WTC11 (cell line): ENCODE measurements at regions of chr11 and their contacts with region 1.

Region 1: GRCh38 chr11:64358907-64359711 is at the start of gene RPS6KA4:
- DNase-seq: peak; percentile 49
- ATAC-seq: peak; percentile 49
- H3K4me3 Mint-ChIP-seq: peak within 1 kb of the TSS; percentile 80
- H3K27ac Mint-ChIP-seq: peak within 1 kb of the TSS; percentile 50
- H3K4me1 Mint-ChIP-seq: peaks cover 26% of the 10 kb centered on the region
- H3K27me3 Mint-ChIP-seq: no peaks in the 10 kb centered on the region
- CTCF ChIP-seq: no peak
- total RNA-seq, gene RPS6KA4: 16.8 to 18.3 TPM (median 18.3 TPM) in 3 replicates

Region 2: GRCh38 chr11:64269380-64270234 is 89.5 kb before region 1 on chr11:
- CTCF ChIA-PET with region 1: interaction called, 25 read pairs
- POLR2A ChIA-PET with region 1: interaction called, 5 read pairs
- DNase-seq: peak; percentile 98
- ATAC-seq: peak; percentile 83
- H3K4me3 Mint-ChIP-seq: peak overlapping the region; percentile 99
- H3K27ac Mint-ChIP-seq: peak overlapping the region; percentile 100
- H3K4me1 Mint-ChIP-seq: peaks cover 21% of the 10 kb centered on the region
- H3K27me3 Mint-ChIP-seq: no peaks in the 10 kb centered on the region
- CTCF ChIP-seq: no peak

Region 3: DNA sequence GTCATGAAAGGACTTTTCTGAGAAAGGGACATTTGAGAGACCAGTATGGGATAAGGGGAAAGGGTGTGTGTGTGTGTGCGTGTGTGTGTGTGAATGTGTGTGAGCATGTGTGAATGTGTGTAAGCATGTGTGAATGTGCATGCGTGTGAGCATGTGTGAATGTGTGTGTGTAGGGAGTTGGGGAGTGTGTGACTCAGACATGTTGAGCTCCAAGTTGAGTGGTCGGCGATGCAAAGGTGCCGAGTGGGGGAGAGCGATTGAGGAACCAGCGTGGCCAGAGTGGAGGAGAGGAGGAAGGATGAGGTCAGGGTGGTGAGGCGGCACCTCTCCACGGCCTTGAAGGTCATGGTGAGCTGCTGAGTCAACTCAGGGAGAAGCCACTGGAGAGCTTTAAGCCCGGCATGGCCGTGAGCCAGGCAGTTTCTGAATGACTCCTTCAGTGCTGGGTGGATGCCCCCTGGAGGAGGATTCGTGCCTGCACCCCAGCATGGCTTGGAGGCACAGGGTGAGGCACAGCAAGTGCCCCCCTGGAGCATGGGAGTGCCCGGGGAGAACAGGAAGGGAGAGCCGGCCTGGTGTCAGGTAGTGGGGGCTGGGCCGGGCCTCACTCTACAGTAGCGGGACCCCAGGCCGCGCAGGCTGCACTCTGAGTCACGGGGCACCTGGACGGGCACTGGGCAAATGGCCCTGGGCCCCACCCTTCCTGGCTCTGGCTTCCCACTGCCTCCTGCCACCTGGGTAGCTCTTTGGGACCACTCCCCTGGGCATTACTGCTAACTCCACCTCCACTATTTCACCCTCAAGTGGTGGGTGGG is 27.3 kb before region 1 on chr11:
- CTCF ChIA-PET with region 1: interaction called, 437 read pairs
- POLR2A ChIA-PET with region 1: no interaction called
- DNase-seq: peak; percentile 65
- ATAC-seq: peak; percentile 79
- H3K4me3 Mint-ChIP-seq: no peak overlapping the region
- H3K27ac Mint-ChIP-seq: peak overlapping the region; percentile 11
- H3K4me1 Mint-ChIP-seq: peaks cover 10% of the 10 kb centered on the region
- H3K27me3 Mint-ChIP-seq: peaks cover 12% of the 10 kb centered on the region; the same call in 1 of the 2 replicates
- CTCF ChIP-seq: no peak

Region 4: DNA sequence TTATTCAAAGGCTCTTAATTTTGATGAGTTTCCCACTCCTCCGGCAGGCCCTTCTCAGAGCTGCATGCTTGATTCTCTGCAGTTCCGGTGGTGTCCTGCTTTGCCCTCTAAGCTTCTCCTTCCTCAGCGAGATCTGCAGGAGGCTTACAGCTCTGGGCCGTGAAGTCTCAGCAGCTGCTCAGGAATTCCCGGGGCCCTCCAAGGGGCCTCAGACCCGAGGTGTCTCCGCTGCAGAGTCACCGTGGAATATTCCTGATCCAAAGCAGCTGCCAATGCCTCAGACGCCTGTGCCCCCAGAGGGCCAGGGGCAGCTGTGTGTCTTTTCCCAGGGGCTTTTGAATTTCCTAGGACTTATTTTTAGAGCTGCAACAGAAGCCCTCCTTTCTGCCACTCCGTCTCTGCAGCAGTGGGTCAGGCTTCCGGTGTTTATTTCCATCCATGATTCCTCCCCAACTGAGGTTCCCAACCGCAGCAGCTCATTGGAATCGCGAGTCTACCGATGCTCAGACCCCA is 37.0 kb after region 1 on chr11:
- CTCF ChIA-PET with region 1: interaction called, 49 read pairs
- POLR2A ChIA-PET with region 1: interaction called, 4 read pairs
- DNase-seq: peak; percentile 48
- ATAC-seq: peak; percentile 90
- H3K4me3 Mint-ChIP-seq: peak overlapping the region; percentile 38
- H3K27ac Mint-ChIP-seq: peak overlapping the region; percentile 96
- H3K4me1 Mint-ChIP-seq: peaks cover 27% of the 10 kb centered on the region
- H3K27me3 Mint-ChIP-seq: peaks cover 23% of the 10 kb centered on the region
- CTCF ChIP-seq: no peak

Region 5: DNA sequence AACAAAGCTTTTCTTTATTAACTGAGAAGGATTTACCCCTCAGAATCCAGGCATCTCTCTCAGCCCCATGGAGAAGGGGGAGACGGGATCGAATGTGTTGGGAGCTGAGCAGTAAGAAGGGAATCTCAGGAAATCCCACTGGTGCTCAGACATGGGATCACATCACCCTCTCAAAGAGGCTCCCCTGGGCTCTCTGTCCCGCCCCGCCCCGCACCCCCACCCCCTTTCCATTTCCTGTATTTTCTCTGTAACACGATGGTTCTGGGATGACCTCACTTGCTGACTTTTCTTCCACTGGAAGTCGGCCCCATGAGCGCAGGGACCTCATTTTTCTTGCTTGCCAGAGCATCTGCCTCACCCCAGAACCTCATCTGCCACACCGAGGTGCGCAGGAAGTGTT is 99.9 kb after region 1 on chr11:
- CTCF ChIA-PET with region 1: interaction called, 12 read pairs
- POLR2A ChIA-PET with region 1: no interaction called
- DNase-seq: no peak
- ATAC-seq: peak; percentile 43; the same call in 1 of the 2 replicates
- H3K4me3 Mint-ChIP-seq: no peak overlapping the region
- H3K27ac Mint-ChIP-seq: no peak overlapping the region
- H3K4me1 Mint-ChIP-seq: peaks cover 16% of the 10 kb centered on the region
- H3K27me3 Mint-ChIP-seq: peaks cover 51% of the 10 kb centered on the region
- CTCF ChIP-seq: no peak

Region 6: DNA sequence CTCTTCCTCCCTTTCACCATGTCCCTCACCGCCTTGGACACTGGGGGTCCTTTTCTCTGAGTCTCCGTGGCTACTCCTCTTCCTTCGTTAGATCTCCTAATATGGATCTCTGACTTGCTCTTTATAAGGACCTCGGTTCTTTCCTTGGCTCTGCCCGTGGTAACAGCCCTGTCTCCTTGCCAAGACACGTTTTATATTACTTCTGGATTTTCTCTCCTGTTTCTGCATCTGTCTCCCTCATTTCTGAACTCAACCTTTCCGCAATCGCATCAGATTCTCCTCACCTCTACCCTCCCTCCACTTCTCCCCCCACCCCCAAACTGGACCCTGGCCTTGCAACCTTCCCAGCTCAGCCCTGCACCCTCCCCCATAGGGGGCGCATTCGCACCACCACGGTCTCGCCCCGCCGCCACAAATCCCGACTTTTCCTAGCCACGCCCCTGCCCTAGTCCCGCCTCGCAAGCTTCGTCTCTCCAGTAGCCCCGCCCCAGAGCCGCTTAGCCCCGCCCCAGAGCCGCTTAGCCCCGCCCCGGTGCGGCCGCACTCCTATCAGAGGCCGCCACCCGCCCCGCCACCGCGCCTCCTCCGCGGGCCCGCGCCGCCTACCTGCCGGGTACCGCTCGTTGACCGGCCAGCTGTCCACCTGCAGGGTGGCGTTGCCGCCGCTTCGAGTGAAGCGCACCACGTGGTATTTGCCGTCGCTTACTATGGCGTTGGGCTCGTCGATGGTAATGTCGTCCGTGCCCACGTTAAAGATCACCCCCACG is 270.9 kb after region 1 on chr11:
- CTCF ChIA-PET with region 1: interaction called, 25 read pairs
- POLR2A ChIA-PET with region 1: no interaction called
- DNase-seq: peak; percentile 99
- ATAC-seq: peak; percentile 98
- H3K4me3 Mint-ChIP-seq: peak overlapping the region; percentile 43
- H3K27ac Mint-ChIP-seq: no peak overlapping the region
- H3K4me1 Mint-ChIP-seq: peaks cover 16% of the 10 kb centered on the region
- H3K27me3 Mint-ChIP-seq: peaks cover 66% of the 10 kb centered on the region
- CTCF ChIP-seq: peak; percentile 54